ENCODE measurements at regions of chr17 and their contacts with region 1.

Region 1: DNA sequence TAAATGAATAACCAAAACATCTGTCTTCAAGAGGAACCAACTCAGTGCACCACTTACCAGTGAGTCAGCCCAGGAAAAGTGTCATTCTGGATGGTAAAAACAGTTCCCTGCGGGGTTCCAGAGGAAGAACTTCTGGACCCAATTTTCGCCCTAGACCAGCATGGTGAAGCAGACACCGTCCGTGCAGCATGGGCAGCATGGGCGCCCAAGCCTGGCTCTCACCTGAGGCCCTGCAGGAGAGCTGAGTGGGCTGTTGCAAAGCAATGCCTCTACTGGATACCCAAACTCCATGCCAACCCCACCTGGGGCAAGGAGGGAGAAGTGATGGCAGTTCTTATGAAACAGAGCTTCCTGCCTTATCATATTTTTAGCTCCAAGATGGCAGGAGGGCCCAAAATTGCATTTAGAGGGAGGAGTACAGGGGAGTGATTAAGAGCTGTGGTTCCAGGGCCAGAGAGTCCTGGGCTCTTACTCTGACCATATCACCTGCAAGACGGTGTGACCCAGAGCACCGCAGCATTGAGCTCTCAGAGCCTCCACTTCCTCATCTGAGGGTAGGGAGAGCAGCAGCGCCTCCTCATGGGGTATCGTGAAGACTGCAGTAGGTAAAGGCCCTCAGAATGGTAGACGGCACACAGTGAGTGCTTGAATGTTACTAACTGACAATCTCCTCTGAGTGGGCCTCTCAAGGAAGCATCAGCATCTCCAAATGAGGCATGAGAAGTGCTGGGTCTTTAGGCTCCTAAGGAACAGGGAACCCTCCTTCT is 16.6 kb upstream of the INPP5K start:
- DNase-seq: peak; percentile 31 to 74
- H3K4me3 ChIP-seq: no peak overlapping the region
- H3K27ac ChIP-seq: no peak overlapping the region
- H3K4me1 ChIP-seq: no peaks in the 10 kb centered on the region
- H3K27me3 ChIP-seq: no peaks in the 10 kb centered on the region
- CTCF ChIP-seq: peak; percentile 81 to 94 (median 83)
- EP300 ChIP-seq: no peak
- POLR2A ChIP-seq: no peak
- RAD21 ChIP-seq: peak; percentile 80 to 84

Region 2: GRCh38 chr17:1379930-1380313 is 153.1 kb before region 1 on chr17:
- CTCF ChIA-PET with region 1: no interaction called
- POLR2A ChIA-PET with region 1: no interaction called
- DNase-seq: no peak
- H3K4me3 ChIP-seq: no peak overlapping the region
- H3K27ac ChIP-seq: no peak overlapping the region
- H3K4me1 ChIP-seq: peaks cover 0 to 3% (median 1%) of the 10 kb centered on the region in 4 experiments; a peak in 2 of 7 replicates
- H3K27me3 ChIP-seq: no peaks in the 10 kb centered on the region
- CTCF ChIP-seq: no peak
- EP300 ChIP-seq: no peak
- POLR2A ChIP-seq: no peak
- RAD21 ChIP-seq: no peak

Region 3: GRCh38 chr17:1462287-1463112 is 70.5 kb before region 1 on chr17:
- CTCF ChIA-PET with region 1: interaction called, 15 read pairs
- POLR2A ChIA-PET with region 1: interaction called, 4 read pairs
- DNase-seq: no peak
- H3K4me3 ChIP-seq: no peak overlapping the region
- H3K27ac ChIP-seq: no peak overlapping the region
- H3K4me1 ChIP-seq: peaks cover 0 to 2% (median 0%) of the 10 kb centered on the region in 4 experiments; a peak in 1 of 7 replicates
- H3K27me3 ChIP-seq: no peaks in the 10 kb centered on the region
- CTCF ChIP-seq: no peak
- EP300 ChIP-seq: no peak
- POLR2A ChIP-seq: no peak
- RAD21 ChIP-seq: no peak

Region 4: GRCh38 chr17:1516388-1517161 is 16.4 kb before region 1 on chr17 and contains the start of gene INPP5K:
- CTCF ChIA-PET with region 1: interaction called, 52 read pairs
- POLR2A ChIA-PET with region 1: interaction called, 22 read pairs
- DNase-seq: peak; percentile 89 to 91
- H3K4me3 ChIP-seq: peak within 1 kb of the TSS; percentile 85 to 92 (median 90)
- H3K27ac ChIP-seq: peak within 1 kb of the TSS; percentile 75
- H3K4me1 ChIP-seq: peaks cover 0 to 6% (median 3%) of the 10 kb centered on the region in 4 experiments; a peak in 5 of 7 replicates
- H3K27me3 ChIP-seq: no peaks in the 10 kb centered on the region
- CTCF ChIP-seq: no peak
- EP300 ChIP-seq: peak in 1 of 2 experiments; percentile 2; a peak in 1 of 3 replicates
- POLR2A ChIP-seq: peak in 1 of 2 experiments; percentile 81; a peak in 2 of 3 replicates
- RAD21 ChIP-seq: no peak
- total RNA-seq, gene INPP5K: 20.4 and 21.0 TPM in 2 replicates

Region 5: DNA sequence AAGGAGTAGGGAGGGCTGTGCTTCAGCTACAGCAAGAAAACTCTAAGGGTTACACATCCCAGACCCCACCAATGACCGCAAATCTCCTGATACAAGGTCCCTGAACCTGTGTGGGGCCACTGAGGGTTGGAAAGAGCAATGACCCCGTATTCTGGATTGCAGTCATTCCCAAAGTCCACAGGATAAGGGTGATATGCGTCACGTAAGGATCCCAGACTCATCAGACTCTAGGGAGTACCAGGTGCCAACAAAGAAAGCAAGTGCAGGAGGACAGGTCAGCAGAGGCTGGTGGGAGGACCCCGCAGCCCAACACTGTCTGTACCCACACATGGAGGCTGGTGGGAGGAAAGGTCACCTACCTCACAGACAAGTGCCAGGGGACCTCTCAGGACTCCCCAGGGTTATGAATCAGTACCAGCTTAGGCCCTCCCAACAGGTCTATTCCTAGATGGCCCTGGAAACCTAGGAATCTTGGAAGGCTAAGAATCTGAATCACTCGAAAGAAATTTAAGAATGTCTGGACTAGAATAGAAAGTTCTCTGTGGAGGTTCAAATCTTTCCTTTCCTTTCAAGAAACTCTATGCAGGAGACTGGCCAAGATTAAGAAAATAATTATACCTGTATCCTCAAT is 13.4 kb after region 1 on chr17:
- CTCF ChIA-PET with region 1: interaction called, 13 read pairs
- POLR2A ChIA-PET with region 1: interaction called, 6 read pairs
- DNase-seq: no peak
- H3K4me3 ChIP-seq: no peak overlapping the region
- H3K27ac ChIP-seq: no peak overlapping the region
- H3K4me1 ChIP-seq: no peaks in the 10 kb centered on the region
- H3K27me3 ChIP-seq: no peaks in the 10 kb centered on the region; a peak in 1 of 7 replicates
- CTCF ChIP-seq: no peak
- EP300 ChIP-seq: no peak
- POLR2A ChIP-seq: no peak
- RAD21 ChIP-seq: no peak

Region 6: DNA sequence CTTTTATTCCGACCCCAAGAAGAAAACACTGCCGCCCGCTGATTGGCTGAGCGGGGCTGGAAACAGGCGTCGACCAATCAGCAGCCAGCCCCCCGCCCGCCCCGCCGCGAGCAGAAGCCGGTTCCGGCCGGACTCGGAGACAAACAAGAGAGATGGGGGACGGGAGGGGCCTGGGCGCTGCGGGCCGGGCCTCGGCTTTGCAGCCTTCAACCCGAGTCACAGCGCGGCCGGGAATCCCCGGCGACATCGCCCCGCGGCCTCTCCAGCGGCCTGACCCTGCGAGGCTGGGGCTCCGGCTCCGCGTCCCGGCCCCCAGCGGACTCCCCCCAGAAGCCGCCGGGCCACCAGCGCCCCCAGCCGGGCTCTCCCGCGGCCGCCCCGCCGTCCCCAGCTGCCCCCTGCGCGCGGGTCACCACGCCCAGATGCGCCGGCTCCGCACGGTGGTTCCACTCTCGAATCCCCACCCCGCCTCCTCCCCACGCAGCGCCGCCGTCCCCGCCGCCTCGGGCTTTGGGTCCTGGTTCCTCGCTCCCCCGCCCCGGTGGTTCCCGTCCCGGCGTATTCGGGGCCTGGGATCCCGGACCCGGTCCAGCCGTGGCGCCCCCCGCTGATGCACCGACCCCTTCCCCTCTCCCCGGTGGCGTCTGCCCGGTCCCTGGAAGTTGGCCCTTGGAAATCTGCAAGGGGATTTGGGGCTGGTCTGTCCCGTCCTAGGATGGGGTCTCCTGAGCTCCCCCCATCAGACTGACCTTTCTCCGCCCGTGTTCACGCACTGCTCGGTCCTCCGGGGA is 96.0 kb after region 1 on chr17:
- CTCF ChIA-PET with region 1: interaction called, 19 read pairs
- POLR2A ChIA-PET with region 1: no interaction called
- DNase-seq: peak in 1 of 2 experiments; percentile 95
- H3K4me3 ChIP-seq: peak overlapping the region; percentile 67 to 79 (median 68)
- H3K27ac ChIP-seq: peak overlapping the region; percentile 53; the same call in 1 of the 2 replicates
- H3K4me1 ChIP-seq: peaks cover 0 to 7% (median 5%) of the 10 kb centered on the region in 4 experiments; a peak in 6 of 7 replicates
- H3K27me3 ChIP-seq: peaks cover 0 to 13% (median 5%) of the 10 kb centered on the region in 4 experiments; a peak in 5 of 7 replicates
- CTCF ChIP-seq: peak; percentile 9 to 22 (median 14); a peak in 3 of 4 replicates
- EP300 ChIP-seq: no peak; a peak in 1 of 3 replicates
- POLR2A ChIP-seq: peak in 1 of 2 experiments; percentile 72; a peak in 2 of 3 replicates
- RAD21 ChIP-seq: peak in 1 of 2 experiments; percentile 37; a peak in 2 of 4 replicates

Region 7: GRCh38 chr17:1684378-1685189 is 151.6 kb after region 1 on chr17 and contains the start of gene PRPF8:
- CTCF ChIA-PET with region 1: no interaction called
- POLR2A ChIA-PET with region 1: no interaction called
- DNase-seq: peak; percentile 90 to 98
- H3K4me3 ChIP-seq: peak within 1 kb of the TSS; percentile 78 to 87 (median 82)
- H3K27ac ChIP-seq: peak within 1 kb of the TSS; percentile 63; the same call in 1 of the 2 replicates
- H3K4me1 ChIP-seq: peaks cover 0 to 5% (median 3%) of the 10 kb centered on the region in 4 experiments; a peak in 3 of 7 replicates
- H3K27me3 ChIP-seq: no peaks in the 10 kb centered on the region
- CTCF ChIP-seq: no peak
- EP300 ChIP-seq: no peak
- POLR2A ChIP-seq: peak; percentile 63 to 84
- RAD21 ChIP-seq: no peak
- total RNA-seq, gene PRPF8: 328 and 329 TPM in 2 replicates

Measured in H1 (cell line).